ENCODE measurements at regions of chr10 and their contacts with region 1.

Region 1: DNA sequence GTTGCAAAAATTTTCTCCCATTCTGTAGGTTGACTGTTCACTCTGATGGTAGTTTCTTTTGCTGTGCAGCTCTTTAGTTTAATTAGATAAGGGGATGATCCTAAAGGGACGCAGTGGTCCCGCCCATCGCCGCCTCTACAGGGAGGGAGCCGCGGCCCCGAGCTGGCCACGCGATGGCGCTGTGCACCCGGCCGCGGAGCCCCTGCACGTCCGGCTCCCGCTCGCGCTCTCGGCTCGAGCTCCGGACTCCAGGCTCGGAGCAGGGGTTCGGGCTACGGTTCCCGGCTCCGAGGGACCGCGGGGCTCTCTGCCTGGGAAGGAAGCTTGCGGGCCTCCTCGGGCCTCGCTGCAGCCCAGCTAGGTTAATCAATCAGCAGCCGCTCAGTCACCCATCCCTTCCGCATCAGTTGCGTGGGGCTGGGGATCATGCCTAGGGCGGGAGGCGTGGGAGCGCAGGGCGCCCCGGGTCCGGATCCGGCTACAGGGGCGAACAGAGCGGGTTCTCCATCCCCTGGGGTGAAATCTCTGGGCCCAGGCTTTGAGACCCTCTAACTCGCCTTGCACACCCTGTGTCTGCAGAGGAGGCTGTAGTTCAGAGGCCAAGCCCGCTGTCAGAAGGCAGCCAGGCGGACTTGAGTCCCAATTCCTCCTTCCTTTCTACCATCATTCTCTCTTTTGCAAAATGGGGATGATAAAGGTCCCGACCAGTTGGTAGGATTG is 97.9 kb downstream of the WDR11 start:
- DNase-seq: peak; percentile 69
- H3K4me3 ChIP-seq: peak overlapping the region in 3 of 4 donors; percentile 13 to 40 (median 21)
- H3K27ac ChIP-seq: no peak overlapping the region
- H3K4me1 ChIP-seq: peaks cover 0 to 7% (median 6%) of the 10 kb centered on the region in 4 donors
- H3K27me3 ChIP-seq: peaks cover 20% of the 10 kb centered on the region
- CTCF ChIP-seq: peak; percentile 82 to 92 (median 85)
- EP300 ChIP-seq: no peak
- POLR2A ChIP-seq: no peak

Region 2: DNA sequence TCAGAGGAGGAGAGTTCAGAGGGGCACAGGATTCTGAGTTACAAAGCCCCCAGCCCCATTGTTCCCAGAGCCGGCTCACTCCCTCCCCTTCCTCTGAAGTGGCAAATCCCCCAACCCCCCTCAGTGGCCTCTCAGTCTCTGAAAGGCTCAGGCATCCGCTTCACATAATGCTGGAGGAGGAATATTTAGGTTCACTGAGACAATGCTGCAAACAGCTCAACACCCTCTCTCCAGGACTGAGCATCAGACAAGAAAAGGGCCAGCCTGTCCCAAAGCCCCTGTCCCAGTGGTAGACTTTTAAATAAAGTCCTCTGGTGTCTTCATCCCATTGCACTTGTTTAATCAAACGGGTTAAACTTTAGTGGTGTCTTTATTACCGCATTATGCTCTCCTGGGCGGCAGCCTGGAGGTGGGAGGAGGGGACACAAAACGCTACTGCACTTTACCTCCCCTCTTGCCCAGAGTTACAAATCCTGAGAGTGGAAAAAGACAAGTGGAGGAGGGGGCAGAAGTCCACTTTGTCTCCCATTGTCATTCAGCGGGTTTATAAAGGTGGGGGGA is 391.3 kb after region 1 on chr10:
- in situ Hi-C with region 1: no loop called
- intact Hi-C with region 1: no loop called
- DNase-seq: no peak
- H3K4me3 ChIP-seq: no peak overlapping the region
- H3K27ac ChIP-seq: no peak overlapping the region
- H3K4me1 ChIP-seq: peaks cover 0 to 4% (median 0%) of the 10 kb centered on the region in 4 donors
- H3K27me3 ChIP-seq: no peaks in the 10 kb centered on the region
- CTCF ChIP-seq: no peak
- EP300 ChIP-seq: no peak
- POLR2A ChIP-seq: no peak

Region 3: GRCh38 chr10:121608469-121609190 is 659.6 kb after region 1 on chr10:
- in situ Hi-C with region 1: loop called (anchors 10 to 25 kb)
- intact Hi-C with region 1: loop called (anchors 2 kb)
- DNase-seq: peak; percentile 75
- H3K4me3 ChIP-seq: peak overlapping the region; percentile 17 to 28 (median 20)
- H3K27ac ChIP-seq: peak overlapping the region in 1 of 4 donors; percentile 38
- H3K4me1 ChIP-seq: peaks cover 0 to 7% (median 2%) of the 10 kb centered on the region in 4 donors
- H3K27me3 ChIP-seq: no peaks in the 10 kb centered on the region
- CTCF ChIP-seq: peak; percentile 57 to 94 (median 91)
- EP300 ChIP-seq: no peak
- POLR2A ChIP-seq: no peak

Region 4: GRCh38 chr10:121899727-121900126 is 950.7 kb after region 1 on chr10:
- in situ Hi-C with region 1: loop called in 2 of 4 experiments (anchors 25 kb)
- intact Hi-C with region 1: loop called (anchors 5 kb)
- DNase-seq: no peak
- H3K4me3 ChIP-seq: no peak overlapping the region
- H3K27ac ChIP-seq: no peak overlapping the region
- H3K4me1 ChIP-seq: peaks cover 0 to 3% (median 0%) of the 10 kb centered on the region in 4 donors
- H3K27me3 ChIP-seq: no peaks in the 10 kb centered on the region
- CTCF ChIP-seq: no peak
- EP300 ChIP-seq: no peak
- POLR2A ChIP-seq: no peak